Ascending aorta (tissue), 2 donors: ENCODE measurements at regions of chr7 and their contacts with region 1.

Region 1: GRCh38 chr7:106542550-106543220 is 118.3 kb downstream of the CCDC71L start:
- DNase-seq: peak in 1 of 2 donors; percentile 68
- H3K4me3 ChIP-seq: no peak overlapping the region
- H3K27ac ChIP-seq: no peak overlapping the region
- H3K4me1 ChIP-seq: no peaks in the 10 kb centered on the region
- H3K27me3 ChIP-seq: no peaks in the 10 kb centered on the region
- CTCF ChIP-seq: peak in 2 of 3 experiments; percentile 43 to 44

Region 2: DNA sequence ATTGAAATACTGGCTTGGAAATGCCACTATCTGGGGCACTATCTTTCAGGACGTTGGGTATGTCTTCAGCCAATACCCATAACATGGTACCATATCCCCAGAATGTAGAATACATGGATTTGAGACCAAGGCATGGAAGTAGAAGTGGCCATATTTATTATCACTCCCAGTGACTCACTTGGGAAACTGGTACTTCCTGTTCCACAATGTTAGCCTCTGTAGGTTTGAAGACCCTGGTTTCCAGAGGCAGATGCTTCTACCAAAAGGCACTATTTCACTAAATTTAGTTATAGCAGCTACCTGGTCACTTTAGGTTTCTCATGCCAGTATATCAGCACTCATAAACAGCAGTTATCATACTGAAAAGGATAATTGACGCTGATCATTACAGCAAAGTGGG is 65.9 kb before region 1 on chr7:
- intact Hi-C with region 1: no loop called
- DNase-seq: no peak
- H3K4me3 ChIP-seq: no peak overlapping the region
- H3K27ac ChIP-seq: no peak overlapping the region
- H3K4me1 ChIP-seq: no peaks in the 10 kb centered on the region
- H3K27me3 ChIP-seq: no peaks in the 10 kb centered on the region
- CTCF ChIP-seq: no peak

Region 3: GRCh38 chr7:106604303-106604923 is 61.7 kb after region 1 on chr7:
- intact Hi-C with region 1: no loop called
- DNase-seq: no peak
- H3K4me3 ChIP-seq: no peak overlapping the region
- H3K27ac ChIP-seq: no peak overlapping the region
- H3K4me1 ChIP-seq: no peaks in the 10 kb centered on the region
- H3K27me3 ChIP-seq: no peaks in the 10 kb centered on the region
- CTCF ChIP-seq: no peak

Region 4: DNA sequence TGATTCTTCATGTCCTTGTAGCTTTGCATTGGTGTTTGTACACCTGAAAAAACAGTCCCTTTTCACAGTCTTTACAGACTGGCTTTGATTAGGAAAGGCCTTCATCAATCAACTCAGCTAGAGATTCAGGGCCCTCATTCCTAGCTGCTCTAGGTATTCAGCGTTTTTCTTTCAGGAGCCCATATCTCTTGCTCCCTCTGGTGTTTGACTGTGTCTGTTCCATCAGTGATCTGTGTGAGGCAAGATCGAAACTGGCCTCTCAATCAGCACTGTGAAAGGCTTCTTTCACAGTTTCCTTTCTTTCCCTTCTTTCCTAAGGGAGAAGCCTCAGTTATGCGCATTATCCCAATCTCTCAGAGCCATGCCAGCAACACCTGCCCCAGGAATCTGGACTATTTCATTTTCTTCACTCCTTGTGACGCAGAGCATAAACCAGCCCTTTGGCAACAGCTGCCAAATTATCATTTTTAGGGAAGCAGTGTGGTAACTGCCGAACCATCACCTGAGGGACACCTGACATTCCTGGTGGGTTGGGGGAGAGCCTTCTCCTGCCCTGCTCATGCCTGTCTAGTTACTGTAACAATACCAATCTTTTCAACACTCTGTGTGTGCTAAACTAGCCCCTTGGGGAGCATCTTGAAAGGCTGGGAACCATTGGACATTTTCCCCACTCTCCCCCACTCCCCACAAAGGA is 194.0 kb after region 1 on chr7:
- intact Hi-C with region 1: loop called (anchors 5 kb)
- DNase-seq: no peak
- H3K4me3 ChIP-seq: no peak overlapping the region
- H3K27ac ChIP-seq: no peak overlapping the region
- H3K4me1 ChIP-seq: no peaks in the 10 kb centered on the region
- H3K27me3 ChIP-seq: no peaks in the 10 kb centered on the region
- CTCF ChIP-seq: peak; percentile 16 to 53 (median 44)